Heart left ventricle (tissue), 16 donors: ENCODE measurements at regions of chr16 and their contacts with region 1.

Region 1: DNA sequence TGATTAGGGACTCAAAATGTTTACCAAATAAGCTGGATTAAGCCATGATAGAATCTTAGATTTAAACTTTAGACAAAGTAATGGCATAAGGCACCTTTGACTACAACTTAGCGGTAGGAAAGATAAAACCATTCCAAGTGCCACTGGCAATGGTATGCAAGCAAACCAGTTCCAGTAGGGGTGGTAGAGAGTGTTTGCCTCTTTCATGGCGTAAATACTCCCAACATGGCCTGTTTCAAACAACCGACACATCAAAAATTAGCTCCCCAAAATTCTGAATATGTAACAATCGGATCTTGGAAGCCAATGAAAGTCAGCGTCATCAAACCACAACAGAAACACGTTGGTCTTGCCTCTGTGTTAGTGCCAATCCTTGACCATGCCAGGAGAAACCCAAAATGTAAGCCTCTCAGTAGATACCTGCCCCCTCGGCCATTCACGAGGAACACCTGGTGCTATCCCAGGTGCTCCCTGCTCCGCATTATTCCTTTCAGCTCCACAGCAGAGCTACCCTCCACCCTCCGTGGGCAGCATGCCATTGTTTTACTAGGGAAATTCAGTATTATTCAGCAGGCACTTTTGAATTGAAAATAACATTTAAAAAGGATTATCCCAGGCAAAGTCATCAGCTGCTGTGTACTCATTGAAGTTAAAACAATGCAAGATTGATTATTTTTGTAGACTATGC is 307.8 kb upstream of the CDH11 start:
- DNase-seq: no peak
- ATAC-seq: no peak
- H3K4me3 ChIP-seq: no peak overlapping the region
- H3K27ac ChIP-seq: no peak overlapping the region
- H3K4me1 ChIP-seq: no peaks in the 10 kb centered on the region
- H3K27me3 ChIP-seq: no peaks in the 10 kb centered on the region
- CTCF ChIP-seq: no peak
- POLR2A ChIP-seq: no peak

Region 2: DNA sequence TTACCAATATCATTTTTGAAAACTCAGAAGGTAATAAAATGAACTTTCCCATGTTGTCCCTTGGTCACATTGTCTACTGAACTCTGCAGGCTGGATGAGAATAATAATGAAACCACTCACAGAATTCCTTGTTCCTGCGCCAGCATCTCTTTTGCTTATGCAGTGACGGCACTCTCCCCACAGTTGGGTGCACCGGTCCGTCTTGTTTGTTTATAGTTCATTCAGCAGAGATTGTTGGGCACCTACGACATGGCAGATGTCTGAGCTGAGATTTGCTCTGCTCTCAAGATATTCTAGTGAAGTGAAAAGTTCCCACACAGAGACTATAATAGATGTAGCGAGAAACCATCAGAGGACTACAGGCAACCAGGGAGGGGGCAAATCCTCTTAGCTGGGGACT is 67.9 kb after region 1 on chr16:
- intact Hi-C with region 1: loop called in 1 of 10 experiments (anchors 10 kb)
- DNase-seq: no peak
- ATAC-seq: no peak
- H3K4me3 ChIP-seq: no peak overlapping the region
- H3K27ac ChIP-seq: no peak overlapping the region
- H3K4me1 ChIP-seq: peaks cover 0 to 5% (median 0%) of the 10 kb centered on the region in 12 donors
- H3K27me3 ChIP-seq: no peaks in the 10 kb centered on the region
- CTCF ChIP-seq: no peak
- POLR2A ChIP-seq: no peak